ENCODE measurements at regions of chr17 and their contacts with region 1.

Region 1: DNA sequence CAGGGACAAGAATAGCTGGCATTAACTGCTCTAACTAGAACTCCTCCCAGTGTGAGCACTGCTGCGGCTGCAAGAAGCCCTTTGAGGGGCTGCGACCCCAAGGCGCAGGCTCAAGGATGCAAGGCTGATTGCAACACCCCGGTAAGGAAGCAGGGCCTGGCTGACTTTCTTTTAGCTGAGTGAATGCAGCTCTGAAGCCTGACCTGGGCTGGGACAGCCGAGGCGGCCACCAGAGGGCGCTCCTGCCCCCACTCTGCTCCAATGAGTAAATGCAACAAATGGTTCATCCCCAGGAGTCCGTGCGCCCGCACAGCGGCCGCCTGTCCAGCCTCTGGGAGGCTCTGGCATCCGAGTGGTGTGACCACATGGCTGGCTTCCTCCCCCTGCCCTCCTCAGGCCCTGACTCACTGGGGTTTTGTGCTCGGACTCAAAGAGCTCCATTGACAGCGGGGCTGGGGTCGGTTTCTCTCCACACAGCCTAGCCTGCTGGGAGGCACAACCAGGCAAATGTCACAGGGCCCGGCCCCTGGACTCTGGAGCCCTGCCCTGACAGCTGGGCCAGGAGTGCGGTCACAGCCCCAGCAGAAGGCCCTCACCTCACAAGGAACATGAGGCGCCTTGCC is at the start of gene SMIM5:
- DNase-seq: peak; percentile 87
- ATAC-seq: peak; percentile 90
- H3K4me3 Mint-ChIP-seq: no peak within 1 kb of the TSS
- H3K27ac Mint-ChIP-seq: peak within 1 kb of the TSS; percentile 9
- H3K4me1 Mint-ChIP-seq: no peaks in the 10 kb centered on the region
- H3K27me3 Mint-ChIP-seq: no peaks in the 10 kb centered on the region
- total RNA-seq, gene SMIM5: 0.15 TPM in 1 of 2 experiments, not detected in the other

Region 2: GRCh38 chr17:75496005-75496404 is 137.0 kb before region 1 on chr17:
- CTCF ChIA-PET with region 1: no interaction called
- DNase-seq: no peak
- ATAC-seq: no peak
- H3K4me3 Mint-ChIP-seq: no peak overlapping the region
- H3K27ac Mint-ChIP-seq: no peak overlapping the region
- H3K4me1 Mint-ChIP-seq: peaks cover 4% of the 10 kb centered on the region
- H3K27me3 Mint-ChIP-seq: no peaks in the 10 kb centered on the region

Region 3: GRCh38 chr17:75614006-75614405 is 19.0 kb before region 1 on chr17:
- CTCF ChIA-PET with region 1: interaction called, 23 read pairs
- DNase-seq: no peak
- ATAC-seq: no peak
- H3K4me3 Mint-ChIP-seq: no peak overlapping the region
- H3K27ac Mint-ChIP-seq: no peak overlapping the region
- H3K4me1 Mint-ChIP-seq: peaks cover 2% of the 10 kb centered on the region
- H3K27me3 Mint-ChIP-seq: no peaks in the 10 kb centered on the region

Region 4: GRCh38 chr17:75652915-75653549 is 20.1 kb after region 1 on chr17:
- CTCF ChIA-PET with region 1: interaction called, 114 read pairs
- DNase-seq: peak; percentile 62
- ATAC-seq: peak; percentile 87
- H3K4me3 Mint-ChIP-seq: no peak overlapping the region
- H3K27ac Mint-ChIP-seq: peak overlapping the region; percentile 54
- H3K4me1 Mint-ChIP-seq: peaks cover 5% of the 10 kb centered on the region
- H3K27me3 Mint-ChIP-seq: no peaks in the 10 kb centered on the region

Region 5: GRCh38 chr17:75673487-75673886 is 40.5 kb after region 1 on chr17:
- CTCF ChIA-PET with region 1: interaction called, 20 read pairs
- DNase-seq: no peak
- ATAC-seq: no peak
- H3K4me3 Mint-ChIP-seq: no peak overlapping the region
- H3K27ac Mint-ChIP-seq: peak overlapping the region; percentile 11
- H3K4me1 Mint-ChIP-seq: peaks cover 25% of the 10 kb centered on the region
- H3K27me3 Mint-ChIP-seq: no peaks in the 10 kb centered on the region

Region 6: GRCh38 chr17:75720725-75721462 is 87.9 kb after region 1 on chr17 and contains the start of gene ITGB4:
- CTCF ChIA-PET with region 1: interaction called, 11 read pairs
- DNase-seq: peak; percentile 64
- ATAC-seq: peak; percentile 95
- H3K4me3 Mint-ChIP-seq: peak within 1 kb of the TSS; percentile 69
- H3K27ac Mint-ChIP-seq: no peak within 1 kb of the TSS
- H3K4me1 Mint-ChIP-seq: peaks cover 3% of the 10 kb centered on the region
- H3K27me3 Mint-ChIP-seq: peaks cover 31% of the 10 kb centered on the region
- total RNA-seq, gene ITGB4: 1.0 to 1.1 TPM